ENCODE measurements at regions of chr2 and their contacts with region 1.

Region 1: GRCh38 chr2:218832520-218832919 is 917 bp upstream of the PRKAG3 start:
- DNase-seq: peak; percentile 77 to 91
- ATAC-seq: peak; percentile 66 to 76
- H3K4me3 ChIP-seq: no peak overlapping the region
- H3K27ac ChIP-seq: peak overlapping the region; percentile 95
- H3K4me1 ChIP-seq: peaks cover 64 to 65% of the 10 kb centered on the region in 2 donors
- H3K27me3 ChIP-seq: no peaks in the 10 kb centered on the region
- CTCF ChIP-seq: no peak
- POLR2A ChIP-seq: no peak

Region 2: GRCh38 chr2:218292048-218293014 is 540.2 kb before region 1 on chr2 and contains the start of gene TMBIM1:
- in situ Hi-C with region 1: no loop called
- intact Hi-C with region 1: loop called (anchors 2 kb)
- DNase-seq: peak; percentile 56 to 78
- ATAC-seq: peak; percentile 74 to 83
- H3K4me3 ChIP-seq: peak within 1 kb of the TSS; percentile 71 to 100 (median 96)
- H3K27ac ChIP-seq: peak within 1 kb of the TSS; percentile 93 to 100 (median 98)
- H3K4me1 ChIP-seq: peaks cover 43 to 48% of the 10 kb centered on the region in 2 donors
- H3K27me3 ChIP-seq: no peaks in the 10 kb centered on the region
- CTCF ChIP-seq: peak; percentile 75 to 100 (median 98)
- POLR2A ChIP-seq: peak; percentile 89 to 95
- total RNA-seq, gene TMBIM1: 142 to 296 (median 215) TPM

Region 3: GRCh38 chr2:218806346-218806978 is 26.1 kb before region 1 on chr2:
- in situ Hi-C with region 1: no loop called
- intact Hi-C with region 1: loop called (anchors 1 kb)
- DNase-seq: peak; percentile 74 to 88
- ATAC-seq: peak; percentile 87 to 88
- H3K4me3 ChIP-seq: peak overlapping the region; percentile 0 to 23 (median 22)
- H3K27ac ChIP-seq: peak overlapping the region; percentile 79 to 92 (median 88)
- H3K4me1 ChIP-seq: peaks cover 25 to 62% of the 10 kb centered on the region in 2 donors
- H3K27me3 ChIP-seq: no peaks in the 10 kb centered on the region
- CTCF ChIP-seq: no peak
- POLR2A ChIP-seq: peak; percentile 6 to 36